ENCODE measurements at regions of chr19 and their contacts with region 1.

Region 1: GRCh38 chr19:49271080-49271762 is 53.8 kb downstream of the SLC6A16 start:
- DNase-seq: no peak
- ATAC-seq: no peak
- H3K4me3 ChIP-seq: no peak overlapping the region
- H3K4me3 Mint-ChIP-seq: no peak overlapping the region
- H3K27ac ChIP-seq: no peak overlapping the region
- H3K27ac Mint-ChIP-seq: no peak overlapping the region
- H3K4me1 ChIP-seq: no peaks in the 10 kb centered on the region
- H3K4me1 Mint-ChIP-seq: no peaks in the 10 kb centered on the region
- H3K27me3 ChIP-seq: no peaks in the 10 kb centered on the region
- H3K27me3 Mint-ChIP-seq: peaks cover 10 to 18% of the 10 kb centered on the region in 2 donors

Region 2: GRCh38 chr19:49326165-49326704 is 55.0 kb after region 1 on chr19:
- CTCF ChIA-PET with region 1: no interaction called
- POLR2A ChIA-PET with region 1: interaction called in 1 of 2 experiments, 10 read pairs
- DNase-seq: no peak
- ATAC-seq: no peak
- H3K4me3 ChIP-seq: no peak overlapping the region
- H3K4me3 Mint-ChIP-seq: no peak overlapping the region
- H3K27ac ChIP-seq: no peak overlapping the region
- H3K27ac Mint-ChIP-seq: no peak overlapping the region
- H3K4me1 ChIP-seq: peaks cover 3 to 4% of the 10 kb centered on the region in 2 experiments
- H3K4me1 Mint-ChIP-seq: peaks cover 26 to 41% (median 29%) of the 10 kb centered on the region in 3 donors
- H3K27me3 ChIP-seq: no peaks in the 10 kb centered on the region
- H3K27me3 Mint-ChIP-seq: no peaks in the 10 kb centered on the region

Measured in T-cell (primary cell).